HepG2 (cell line): ENCODE measurements at regions of chr17 and their contacts with region 1.

Region 1: DNA sequence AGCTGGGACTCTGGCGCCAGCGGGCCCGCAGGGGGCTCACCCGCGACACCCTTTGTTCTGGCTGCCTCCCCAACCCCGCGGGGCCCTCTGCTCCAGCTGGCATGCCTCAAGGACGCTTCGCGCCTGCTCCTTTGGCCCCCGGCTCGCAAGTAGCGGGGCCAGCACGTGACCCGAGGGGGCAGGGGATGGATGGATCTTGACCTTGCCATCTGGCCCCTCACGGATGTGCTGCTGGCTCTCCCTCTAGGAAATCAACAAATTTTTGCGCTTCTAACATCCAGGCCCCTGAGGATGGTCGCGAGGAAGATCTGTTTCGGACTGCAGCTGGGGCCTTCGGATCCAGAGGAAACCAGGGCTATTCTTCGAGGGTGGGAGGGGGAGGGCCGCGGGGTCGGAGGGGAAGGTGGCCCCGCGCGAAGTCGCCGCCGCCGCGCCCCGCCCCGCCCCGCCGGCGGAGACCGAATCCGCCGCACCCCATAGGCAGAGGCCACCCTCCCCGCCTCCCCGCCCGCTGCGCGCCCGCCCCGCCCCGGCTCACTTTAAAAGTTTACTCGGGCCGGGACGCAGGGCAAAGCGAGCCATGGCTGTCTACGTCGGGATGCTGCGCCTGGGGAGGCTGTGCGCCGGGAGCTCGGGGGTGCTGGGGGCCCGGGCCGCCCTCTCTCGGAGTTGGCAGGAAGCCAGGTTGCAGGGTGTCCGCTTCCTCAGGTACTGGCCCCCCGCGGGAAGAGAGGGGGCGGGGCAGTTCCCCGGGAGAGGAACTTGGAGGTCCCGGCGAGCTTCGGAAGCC is at the start of gene ACSF2:
- DNase-seq: peak; percentile 54
- ATAC-seq: peak; percentile 67
- H3K4me3 ChIP-seq: peak within 1 kb of the TSS; percentile 74 to 91 (median 90)
- H3K27ac ChIP-seq: peak within 1 kb of the TSS; percentile 83
- H3K4me1 ChIP-seq: peaks cover 92% of the 10 kb centered on the region
- H3K27me3 ChIP-seq: no peaks in the 10 kb centered on the region; a peak in 1 of 5 replicates
- CTCF ChIP-seq: peak; percentile 38
- EP300 ChIP-seq: 0 out of 4 replicates have a peak, but pooled peaks of 1 of the 2 experiments have one; percentile 13
- POLR2A ChIP-seq: peak; percentile 51 to 89; a peak in 3 of 4 replicates
- RAD21 ChIP-seq: no peak
- total RNA-seq, gene ACSF2: 32.0 and 87.3 TPM in 2 replicates

Region 2: GRCh38 chr17:50440172-50440837 is 14.4 kb after region 1 on chr17:
- CTCF ChIA-PET with region 1: no interaction called
- POLR2A ChIA-PET with region 1: interaction called, 19 read pairs
- in situ Hi-C with region 1: no loop called
- intact Hi-C with region 1: no loop called
- DNase-seq: peak; percentile 67
- ATAC-seq: peak; percentile 90
- H3K4me3 ChIP-seq: 0 out of 6 replicates have a peak overlapping the region, but pooled peaks of 1 of the 3 experiments have one; percentile 1
- H3K27ac ChIP-seq: peak overlapping the region; percentile 58
- H3K4me1 ChIP-seq: peaks cover 52% of the 10 kb centered on the region
- H3K27me3 ChIP-seq: no peaks in the 10 kb centered on the region
- CTCF ChIP-seq: no peak
- EP300 ChIP-seq: no peak
- POLR2A ChIP-seq: no peak
- RAD21 ChIP-seq: 0 out of 2 replicates have a peak, but pooled peaks have one; percentile 19

Region 3: DNA sequence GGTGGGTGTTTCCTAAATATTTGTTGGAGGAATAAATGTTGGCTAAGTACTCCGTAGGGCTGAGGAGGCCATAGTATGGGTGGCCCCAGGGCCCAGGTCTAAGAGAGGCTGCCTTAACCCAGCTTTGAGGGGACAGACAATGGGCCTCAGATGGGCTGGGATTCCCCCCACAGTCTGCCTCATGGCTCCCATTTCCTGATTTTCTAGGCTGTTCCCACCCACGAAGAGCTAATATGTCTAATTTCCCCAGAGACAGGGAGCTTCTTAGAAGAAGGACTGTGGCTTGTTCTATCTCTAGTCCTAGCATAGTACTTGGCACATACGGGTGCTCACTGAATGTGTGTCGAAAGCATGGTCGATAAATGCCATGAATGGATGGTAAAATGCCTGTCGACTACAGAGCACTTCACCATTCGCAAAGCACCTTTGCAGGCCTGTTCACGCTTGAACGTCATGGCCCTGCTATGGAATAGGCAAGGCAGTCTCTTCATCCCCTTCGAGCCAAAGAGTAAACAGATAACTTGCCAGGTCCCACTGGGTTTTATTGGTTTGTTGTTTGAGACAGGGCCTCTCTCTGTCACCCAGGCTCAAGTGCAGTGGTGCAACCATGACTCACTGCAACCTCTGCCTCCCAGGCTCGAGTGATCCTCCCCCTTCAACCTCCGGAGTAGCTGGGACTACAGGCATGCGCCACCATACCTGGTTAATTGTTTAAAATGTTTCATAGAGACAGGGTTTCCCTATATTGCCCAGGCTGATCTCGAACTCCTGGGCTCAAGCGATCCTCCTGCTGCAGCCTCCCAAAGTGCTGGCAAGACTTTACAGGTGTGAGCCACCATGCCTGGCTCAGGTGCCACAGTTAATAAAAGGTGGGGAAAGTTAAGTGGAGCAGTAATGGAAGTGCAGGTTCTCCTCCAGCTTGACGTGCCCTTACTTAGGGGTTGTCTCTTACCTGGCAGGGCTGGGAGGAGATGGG is 33.1 kb after region 1 on chr17:
- CTCF ChIA-PET with region 1: no interaction called
- POLR2A ChIA-PET with region 1: interaction called, 23 read pairs
- in situ Hi-C with region 1: no loop called
- intact Hi-C with region 1: no loop called
- DNase-seq: peak; percentile 95
- ATAC-seq: peak; percentile 89
- H3K4me3 ChIP-seq: peak overlapping the region in 1 of 3 experiments; percentile 18; a peak in 1 of 6 replicates
- H3K27ac ChIP-seq: peak overlapping the region; percentile 41
- H3K4me1 ChIP-seq: peaks cover 24% of the 10 kb centered on the region
- H3K27me3 ChIP-seq: no peaks in the 10 kb centered on the region
- CTCF ChIP-seq: peak; percentile 26
- EP300 ChIP-seq: peak; percentile 39 to 57; a peak in 2 of 4 replicates
- POLR2A ChIP-seq: peak; percentile 20 to 31; a peak in 2 of 4 replicates
- RAD21 ChIP-seq: no peak